BJ (cell line): ENCODE measurements at regions of chr19 and their contacts with region 1.

Region 1: GRCh38 chr19:51473009-51473707 is 5.2 kb upstream of the CEACAM18 start:
- DNase-seq: no peak
- H3K4me3 ChIP-seq: no peak overlapping the region
- H3K27me3 ChIP-seq: no peaks in the 10 kb centered on the region
- CTCF ChIP-seq: peak; percentile 87

Region 2: DNA sequence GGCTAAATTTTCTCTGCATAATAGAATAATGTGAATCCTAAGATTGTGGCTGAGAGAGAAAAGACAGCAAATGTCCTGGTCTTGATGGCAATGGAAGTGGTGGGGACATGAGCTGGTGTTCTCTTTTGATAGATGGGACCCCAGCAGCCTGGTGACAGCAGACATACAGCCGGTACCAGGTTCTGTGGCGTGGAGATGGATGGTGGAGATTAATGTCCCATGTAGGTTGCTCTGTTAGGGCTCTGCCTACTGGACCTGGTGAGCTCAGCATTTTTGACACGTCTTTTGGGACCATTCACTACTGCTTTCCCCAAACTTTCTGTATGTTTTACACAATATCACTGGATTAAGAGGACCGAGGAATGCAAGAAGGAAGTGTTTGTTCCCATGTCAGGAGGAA is 181.6 kb after region 1 on chr19:
- CTCF ChIA-PET with region 1: interaction called, 55 read pairs
- POLR2A ChIA-PET with region 1: no interaction called
- DNase-seq: no peak
- H3K4me3 ChIP-seq: no peak overlapping the region
- H3K27me3 ChIP-seq: no peaks in the 10 kb centered on the region
- CTCF ChIP-seq: no peak